ENCODE measurements at regions of chr15 and their contacts with region 1.

Region 1: DNA sequence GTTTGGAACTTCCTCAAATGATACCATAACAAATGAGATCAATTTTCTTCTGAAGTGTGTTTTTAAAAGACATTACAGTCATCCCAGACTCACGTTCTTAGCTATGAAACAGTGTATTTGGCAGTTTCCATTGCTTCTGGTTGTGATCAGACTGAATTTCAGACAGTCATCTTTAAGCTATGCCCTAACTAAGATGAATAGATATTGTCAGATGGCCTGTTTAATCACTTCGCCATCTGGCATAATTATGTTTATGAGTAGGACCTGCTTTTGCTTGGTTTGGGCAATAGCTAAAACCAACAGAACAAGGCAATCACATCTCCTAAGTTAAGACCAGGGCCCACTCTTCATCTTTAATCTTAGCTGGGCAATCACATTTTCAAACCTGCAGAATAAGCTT is 313.1 kb downstream of the SV2B start:
- DNase-seq: no peak
- H3K4me3 ChIP-seq: no peak overlapping the region
- CTCF ChIP-seq: no peak

Region 2: DNA sequence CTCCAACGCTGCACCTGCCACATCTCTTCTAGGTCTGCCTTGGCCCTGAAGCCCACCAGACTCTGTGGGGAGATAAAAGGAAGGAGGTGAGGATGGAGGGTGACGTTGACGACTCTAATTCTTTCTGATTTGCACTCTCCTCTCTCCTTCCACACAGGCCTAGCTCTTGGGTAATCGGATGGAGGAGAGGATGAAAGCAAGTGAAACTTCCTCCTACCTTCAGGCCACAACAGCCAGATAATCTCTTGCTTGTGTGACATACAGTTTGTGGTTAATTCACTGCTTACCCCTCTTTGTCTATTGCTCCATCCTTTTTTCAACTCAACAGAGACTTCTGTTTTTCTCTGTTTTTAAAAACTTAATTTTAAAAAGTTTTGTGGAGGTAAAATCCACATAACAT is 104.9 kb before region 1 on chr15:
- in situ Hi-C with region 1: loop called (anchors 5 kb)
- DNase-seq: no peak
- H3K4me3 ChIP-seq: no peak overlapping the region
- CTCF ChIP-seq: no peak

Region 3: DNA sequence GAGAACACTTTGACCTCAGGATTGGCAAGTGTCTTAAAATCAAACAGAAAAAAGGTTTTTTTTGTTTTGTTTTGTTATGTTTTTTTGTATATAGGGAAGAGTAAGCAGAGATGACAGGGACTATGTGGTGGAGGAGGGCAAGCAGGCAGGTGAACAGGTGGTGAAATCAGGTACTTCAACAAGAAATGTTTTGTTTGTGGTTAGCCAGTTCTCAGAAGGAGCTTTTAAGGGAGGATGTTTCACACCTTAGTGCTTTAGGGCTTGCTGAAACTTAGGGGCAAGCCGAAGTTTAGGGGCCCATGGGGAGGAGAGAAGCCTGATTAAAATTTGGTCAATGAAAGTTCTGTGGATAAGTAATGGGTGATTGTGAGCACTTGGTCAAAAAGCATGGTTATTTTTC is 69.7 kb after region 1 on chr15:
- in situ Hi-C with region 1: no loop called
- DNase-seq: no peak
- H3K4me3 ChIP-seq: no peak overlapping the region
- CTCF ChIP-seq: no peak

Measured in astrocyte of the cerebellum (primary cell).